Endothelial cell of umbilical vein (primary cell): ENCODE measurements at regions of chr4 and their contacts with region 1.

Region 1: GRCh38 chr4:123996718-123997510 is 600.3 kb downstream of the SPRY1 start:
- DNase-seq: no peak
- H3K4me3 ChIP-seq: no peak overlapping the region
- H3K27ac ChIP-seq: no peak overlapping the region
- H3K4me1 ChIP-seq: peaks cover 11% of the 10 kb centered on the region
- H3K27me3 ChIP-seq: no peaks in the 10 kb centered on the region
- CTCF ChIP-seq: peak in 1 of 2 donors; percentile 17
- POLR2A ChIP-seq: no peak

Region 2: GRCh38 chr4:123676890-123677229 is 320.1 kb before region 1 on chr4:
- CTCF ChIA-PET with region 1: no interaction called
- POLR2A ChIA-PET with region 1: no interaction called
- dilution Hi-C with region 1: no loop called
- intact Hi-C with region 1: no loop called
- DNase-seq: no peak
- H3K4me3 ChIP-seq: no peak overlapping the region
- H3K27ac ChIP-seq: no peak overlapping the region
- H3K4me1 ChIP-seq: no peaks in the 10 kb centered on the region
- H3K27me3 ChIP-seq: no peaks in the 10 kb centered on the region
- CTCF ChIP-seq: no peak
- POLR2A ChIP-seq: no peak

Region 3: GRCh38 chr4:124032035-124032434 is 35.1 kb after region 1 on chr4:
- CTCF ChIA-PET with region 1: no interaction called
- POLR2A ChIA-PET with region 1: no interaction called
- dilution Hi-C with region 1: no loop called
- intact Hi-C with region 1: loop called (anchors 1 kb)
- DNase-seq: no peak
- H3K4me3 ChIP-seq: no peak overlapping the region
- H3K27ac ChIP-seq: no peak overlapping the region
- H3K4me1 ChIP-seq: no peaks in the 10 kb centered on the region
- H3K27me3 ChIP-seq: no peaks in the 10 kb centered on the region
- CTCF ChIP-seq: no peak
- POLR2A ChIP-seq: no peak